Activated CD4-positive, alpha-beta T cell treated with anti-CD3 and anti-CD28 coated beads for 36 hours (primary cell): ENCODE measurements at regions of chr19 and their contacts with region 1.

Region 1: DNA sequence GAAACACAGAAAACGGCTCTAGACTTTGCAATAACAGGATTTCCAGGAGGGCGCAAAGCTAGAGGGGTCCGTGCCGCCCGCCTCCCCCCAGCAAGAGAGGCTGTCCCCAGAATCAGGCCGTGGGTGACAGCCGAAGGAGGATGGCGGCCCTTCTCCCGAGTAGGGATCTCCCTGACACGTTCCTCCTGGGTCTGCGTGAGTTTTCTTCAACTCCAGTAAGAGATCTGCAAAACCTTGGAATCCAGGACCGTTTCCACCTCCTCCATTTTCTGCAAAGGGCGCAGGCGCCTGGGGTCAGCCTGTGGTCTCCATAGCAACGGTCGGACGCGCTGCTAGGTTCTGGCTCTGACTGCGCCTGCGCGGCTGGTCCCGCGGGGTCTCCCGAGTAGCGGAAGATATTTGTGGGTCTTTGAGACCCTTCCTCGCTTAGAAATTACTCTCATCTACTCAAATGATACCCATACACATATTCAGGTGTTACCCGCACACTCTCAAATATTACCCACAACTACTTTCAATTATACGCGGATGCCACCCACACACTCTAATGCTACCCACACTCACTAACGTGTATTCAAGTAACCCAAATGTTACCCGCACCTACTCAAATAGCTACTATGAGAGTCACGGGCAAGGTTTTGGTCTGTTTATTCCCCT is 2.1 kb downstream of the PNMA8C start:
- DNase-seq: peak; percentile 76
- ATAC-seq: peak; percentile 79
- H3K4me3 Mint-ChIP-seq: peak overlapping the region; percentile 57
- H3K27ac Mint-ChIP-seq: no peak overlapping the region
- H3K4me1 Mint-ChIP-seq: peaks cover 27% of the 10 kb centered on the region
- H3K27me3 Mint-ChIP-seq: peaks cover 73% of the 10 kb centered on the region

Region 2: GRCh38 chr19:46115396-46116106 is 311.1 kb before region 1 on chr19:
- CTCF ChIA-PET with region 1: no interaction called
- POLR2A ChIA-PET with region 1: no interaction called
- intact Hi-C with region 1: loop called in 1 of 2 experiments (anchors 2 kb)
- DNase-seq: peak; percentile 84
- ATAC-seq: peak; percentile 99
- H3K4me3 Mint-ChIP-seq: no peak overlapping the region
- H3K27ac Mint-ChIP-seq: no peak overlapping the region
- H3K4me1 Mint-ChIP-seq: peaks cover 13% of the 10 kb centered on the region
- H3K27me3 Mint-ChIP-seq: peaks cover 59% of the 10 kb centered on the region

Region 3: GRCh38 chr19:46306501-46306900 is 120.1 kb before region 1 on chr19:
- CTCF ChIA-PET with region 1: no interaction called
- POLR2A ChIA-PET with region 1: interaction called, 10 read pairs
- intact Hi-C with region 1: no loop called
- DNase-seq: no peak
- ATAC-seq: no peak
- H3K4me3 Mint-ChIP-seq: no peak overlapping the region
- H3K27ac Mint-ChIP-seq: no peak overlapping the region
- H3K4me1 Mint-ChIP-seq: no peaks in the 10 kb centered on the region
- H3K27me3 Mint-ChIP-seq: no peaks in the 10 kb centered on the region

Region 4: DNA sequence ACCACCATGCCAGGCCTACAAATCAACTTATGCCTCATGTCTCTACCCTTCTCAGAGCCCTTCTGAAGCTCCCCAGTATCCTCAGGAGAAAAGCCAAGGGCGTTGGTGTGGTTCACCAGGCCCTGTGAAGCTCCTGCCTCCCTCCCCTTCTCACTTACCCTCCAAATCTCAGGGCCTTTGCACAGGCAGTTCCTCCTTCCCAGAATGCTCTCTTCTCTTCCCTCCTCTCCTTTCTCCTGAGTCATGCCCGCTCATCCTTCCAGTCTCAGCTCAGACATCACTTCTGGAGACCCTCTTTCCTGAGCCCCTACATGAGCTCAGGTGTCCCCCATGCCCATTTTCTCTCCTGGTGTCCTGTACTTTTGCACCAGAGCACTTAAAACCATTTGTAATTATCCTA is 109.3 kb before region 1 on chr19:
- CTCF ChIA-PET with region 1: no interaction called
- POLR2A ChIA-PET with region 1: no interaction called
- intact Hi-C with region 1: no loop called
- DNase-seq: no peak
- ATAC-seq: no peak
- H3K4me3 Mint-ChIP-seq: no peak overlapping the region
- H3K27ac Mint-ChIP-seq: no peak overlapping the region
- H3K4me1 Mint-ChIP-seq: no peaks in the 10 kb centered on the region
- H3K27me3 Mint-ChIP-seq: no peaks in the 10 kb centered on the region

Region 5: DNA sequence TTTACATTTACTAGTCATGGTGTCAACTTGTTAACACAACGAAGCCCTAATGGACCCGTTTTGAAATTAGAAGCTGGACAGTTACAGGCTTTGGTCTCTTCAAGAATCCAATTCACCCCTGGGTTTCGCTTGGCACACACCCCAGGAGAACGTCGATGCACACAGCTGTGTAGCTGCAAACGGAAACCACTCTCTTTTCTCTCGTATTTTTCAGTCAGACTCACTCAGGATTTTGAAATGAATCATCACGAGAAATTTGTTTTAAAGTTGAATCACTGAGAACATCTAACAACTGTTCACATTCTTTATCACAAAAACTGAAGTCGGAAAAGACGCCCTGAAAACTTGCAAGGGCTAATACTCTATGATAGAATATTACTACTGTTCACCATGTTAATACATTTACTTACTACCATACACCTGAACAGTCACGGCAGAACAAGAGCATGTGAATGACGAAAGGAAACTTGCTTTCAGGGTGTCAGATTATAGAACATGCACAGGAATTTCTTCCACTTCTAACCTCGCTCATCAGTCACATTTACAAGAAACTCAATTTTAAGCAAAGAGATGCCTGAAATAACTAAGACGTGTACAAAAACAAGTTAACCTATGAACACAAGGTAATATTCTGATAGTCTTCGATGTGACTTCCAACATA is 40.0 kb after region 1 on chr19:
- CTCF ChIA-PET with region 1: no interaction called
- POLR2A ChIA-PET with region 1: no interaction called
- intact Hi-C with region 1: loop called in 1 of 2 experiments (anchors 2 kb)
- DNase-seq: peak; percentile 54
- ATAC-seq: peak; percentile 81
- H3K4me3 Mint-ChIP-seq: no peak overlapping the region
- H3K27ac Mint-ChIP-seq: no peak overlapping the region
- H3K4me1 Mint-ChIP-seq: peaks cover 11% of the 10 kb centered on the region
- H3K27me3 Mint-ChIP-seq: peaks cover 29% of the 10 kb centered on the region